ENCODE measurements at regions of chr10 and their contacts with region 1.

Region 1: DNA sequence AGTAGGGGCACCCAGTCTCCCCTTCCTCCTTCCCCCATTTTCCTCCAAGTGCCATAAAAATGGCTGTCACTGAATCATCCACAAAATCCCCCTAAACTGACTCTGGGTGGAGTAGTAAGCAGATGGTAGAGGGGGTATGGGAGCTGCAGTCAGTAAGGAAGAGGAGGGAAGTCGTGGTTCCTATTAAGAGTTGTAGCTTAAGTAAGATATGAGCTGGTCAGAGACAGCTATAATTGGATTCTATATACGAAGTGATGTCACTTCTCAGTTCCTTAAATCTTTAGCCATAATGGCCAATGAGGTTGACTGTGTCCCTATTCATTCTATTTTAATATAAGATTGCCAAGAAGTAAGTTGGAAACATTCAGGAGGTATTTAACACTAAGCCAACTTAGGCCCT is 131.7 kb downstream of the SLC16A9 start:
- DNase-seq: no peak

Region 2: GRCh38 chr10:57925044-57925443 is 1652.9 kb before region 1 on chr10:
- intact Hi-C with region 1: no loop called
- DNase-seq: no peak

Region 3: GRCh38 chr10:59240582-59241183 is 337.3 kb before region 1 on chr10:
- intact Hi-C with region 1: loop called in 1 of 2 experiments (anchors 5 kb)
- DNase-seq: no peak

Region 4: GRCh38 chr10:59258890-59259289 is 319.1 kb before region 1 on chr10:
- intact Hi-C with region 1: loop called in 1 of 2 experiments (anchors 10 kb)
- DNase-seq: no peak